Activated naive CD4-positive, alpha-beta T cell treated with anti-CD3 and anti-CD28 coated beads for 36 hours (primary cell): ENCODE measurements at regions of chr11 and their contacts with region 1.

Region 1: GRCh38 chr11:8099291-8099899 is 18.4 kb downstream of the TUB start:
- DNase-seq: peak; percentile 88
- H3K4me3 Mint-ChIP-seq: no peak overlapping the region
- H3K27ac Mint-ChIP-seq: no peak overlapping the region
- H3K4me1 Mint-ChIP-seq: no peaks in the 10 kb centered on the region
- H3K27me3 Mint-ChIP-seq: no peaks in the 10 kb centered on the region

Region 2: DNA sequence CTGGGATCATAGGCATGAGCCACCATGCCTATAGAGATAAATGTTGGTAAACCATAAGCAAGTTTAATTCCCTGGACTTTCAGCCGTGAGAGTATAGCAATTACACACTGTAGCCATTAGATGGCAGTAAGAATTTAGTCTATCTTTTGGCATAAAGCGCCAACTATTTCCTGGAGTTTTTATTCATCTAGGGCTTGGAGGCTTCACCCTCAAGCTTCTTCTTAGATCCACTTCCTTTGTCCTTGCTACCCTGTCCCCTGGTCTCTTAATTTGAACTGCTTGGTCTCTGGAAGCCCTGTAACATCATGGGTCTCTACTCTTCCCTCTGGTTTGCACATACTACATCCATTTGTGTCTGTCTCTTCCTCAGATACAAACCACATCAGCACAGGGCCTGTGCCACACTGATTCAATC is 206.5 kb before region 1 on chr11:
- CTCF ChIA-PET with region 1: interaction called, 18 read pairs
- intact Hi-C with region 1: loop called (anchors 2 kb)
- DNase-seq: no peak
- H3K4me3 Mint-ChIP-seq: no peak overlapping the region
- H3K27ac Mint-ChIP-seq: no peak overlapping the region
- H3K4me1 Mint-ChIP-seq: no peaks in the 10 kb centered on the region
- H3K27me3 Mint-ChIP-seq: peaks cover 7% of the 10 kb centered on the region

Region 3: GRCh38 chr11:8011981-8012444 is 87.4 kb before region 1 on chr11:
- CTCF ChIA-PET with region 1: interaction called, 90 read pairs
- intact Hi-C with region 1: no loop called
- DNase-seq: no peak
- H3K4me3 Mint-ChIP-seq: no peak overlapping the region
- H3K27ac Mint-ChIP-seq: no peak overlapping the region
- H3K4me1 Mint-ChIP-seq: no peaks in the 10 kb centered on the region
- H3K27me3 Mint-ChIP-seq: peaks cover 12% of the 10 kb centered on the region

Region 4: GRCh38 chr11:8056810-8057463 is 42.5 kb before region 1 on chr11:
- CTCF ChIA-PET with region 1: interaction called, 20 read pairs
- intact Hi-C with region 1: no loop called
- DNase-seq: no peak
- H3K4me3 Mint-ChIP-seq: no peak overlapping the region
- H3K27ac Mint-ChIP-seq: no peak overlapping the region
- H3K4me1 Mint-ChIP-seq: no peaks in the 10 kb centered on the region
- H3K27me3 Mint-ChIP-seq: peaks cover 2% of the 10 kb centered on the region

Region 5: DNA sequence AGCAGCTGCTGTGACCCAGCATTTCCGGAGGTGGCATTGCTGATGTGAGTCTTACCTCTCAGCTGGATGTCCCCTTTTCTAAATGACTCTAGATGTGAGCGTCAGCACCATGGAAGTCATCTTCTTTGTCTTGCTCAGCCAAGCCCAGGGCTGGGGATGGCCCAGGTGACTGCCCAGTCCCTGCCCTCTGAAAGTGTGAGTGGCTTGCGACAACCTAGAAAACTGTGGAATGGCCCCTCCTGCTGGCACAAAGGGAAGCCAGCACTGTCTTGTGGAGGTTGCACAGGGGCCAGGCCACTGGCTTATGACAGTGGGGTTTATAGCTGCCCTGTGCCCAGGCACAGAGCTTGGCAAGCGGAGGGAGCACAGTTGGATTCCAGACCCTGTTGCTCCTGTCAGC is 12.2 kb before region 1 on chr11:
- CTCF ChIA-PET with region 1: interaction called, 23 read pairs
- intact Hi-C with region 1: no loop called
- DNase-seq: peak; percentile 15
- H3K4me3 Mint-ChIP-seq: no peak overlapping the region
- H3K27ac Mint-ChIP-seq: no peak overlapping the region
- H3K4me1 Mint-ChIP-seq: no peaks in the 10 kb centered on the region
- H3K27me3 Mint-ChIP-seq: peaks cover 23% of the 10 kb centered on the region

Region 6: GRCh38 chr11:8122173-8122764 is 22.9 kb after region 1 on chr11:
- CTCF ChIA-PET with region 1: no interaction called
- intact Hi-C with region 1: no loop called
- DNase-seq: no peak
- H3K4me3 Mint-ChIP-seq: no peak overlapping the region
- H3K27ac Mint-ChIP-seq: no peak overlapping the region
- H3K4me1 Mint-ChIP-seq: peaks cover 5% of the 10 kb centered on the region
- H3K27me3 Mint-ChIP-seq: no peaks in the 10 kb centered on the region